B cell (primary cell): ENCODE measurements at regions of chr18 and their contacts with region 1.

Region 1: GRCh38 chr18:59139371-59140298 is at the start of gene SEC11C:
- DNase-seq: peak; percentile 100
- ATAC-seq: peak; percentile 85
- H3K4me3 ChIP-seq: peak within 1 kb of the TSS; percentile 67 to 89 (median 82)
- H3K4me3 Mint-ChIP-seq: peak within 1 kb of the TSS; percentile 99
- H3K27ac ChIP-seq: peak within 1 kb of the TSS; percentile 99 to 100
- H3K27ac Mint-ChIP-seq: peak within 1 kb of the TSS; percentile 100
- H3K4me1 ChIP-seq: peaks cover 24 to 38% of the 10 kb centered on the region in 2 donors
- H3K4me1 Mint-ChIP-seq: peaks cover 42% of the 10 kb centered on the region
- H3K27me3 ChIP-seq: peaks cover 0 to 12% (median 4%) of the 10 kb centered on the region in 4 experiments
- H3K27me3 Mint-ChIP-seq: peaks cover 7% of the 10 kb centered on the region
- CTCF ChIP-seq: no peak
- total RNA-seq, gene SEC11C: 69.8 and 76.8 TPM in 2 replicates

Region 2: GRCh38 chr18:57621246-57621604 is 1518.4 kb before region 1 on chr18:
- CTCF ChIA-PET with region 1: no interaction called
- POLR2A ChIA-PET with region 1: no interaction called
- intact Hi-C with region 1: loop called (anchors 5 kb)
- DNase-seq: no peak
- ATAC-seq: peak; percentile 4
- H3K4me3 ChIP-seq: peak overlapping the region; percentile 85 to 90 (median 89)
- H3K4me3 Mint-ChIP-seq: peak overlapping the region; percentile 93
- H3K27ac ChIP-seq: peak overlapping the region; percentile 86 to 88
- H3K27ac Mint-ChIP-seq: peak overlapping the region; percentile 95
- H3K4me1 ChIP-seq: peaks cover 11 to 24% of the 10 kb centered on the region in 2 donors
- H3K4me1 Mint-ChIP-seq: peaks cover 32% of the 10 kb centered on the region
- H3K27me3 ChIP-seq: no peaks in the 10 kb centered on the region
- H3K27me3 Mint-ChIP-seq: no peaks in the 10 kb centered on the region
- CTCF ChIP-seq: no peak

Region 3: GRCh38 chr18:58661423-58661822 is 478.2 kb before region 1 on chr18:
- CTCF ChIA-PET with region 1: no interaction called
- POLR2A ChIA-PET with region 1: no interaction called
- intact Hi-C with region 1: loop called (anchors 5 kb)
- DNase-seq: no peak
- ATAC-seq: no peak
- H3K4me3 ChIP-seq: peak overlapping the region in 1 of 5 experiments; percentile 43
- H3K4me3 Mint-ChIP-seq: peak overlapping the region; percentile 52
- H3K27ac ChIP-seq: peak overlapping the region in 1 of 2 donors; percentile 85
- H3K27ac Mint-ChIP-seq: peak overlapping the region; percentile 66
- H3K4me1 ChIP-seq: peaks cover 78% of the 10 kb centered on the region in 2 donors
- H3K4me1 Mint-ChIP-seq: peaks cover 82% of the 10 kb centered on the region
- H3K27me3 ChIP-seq: no peaks in the 10 kb centered on the region
- H3K27me3 Mint-ChIP-seq: no peaks in the 10 kb centered on the region
- CTCF ChIP-seq: no peak

Region 4: DNA sequence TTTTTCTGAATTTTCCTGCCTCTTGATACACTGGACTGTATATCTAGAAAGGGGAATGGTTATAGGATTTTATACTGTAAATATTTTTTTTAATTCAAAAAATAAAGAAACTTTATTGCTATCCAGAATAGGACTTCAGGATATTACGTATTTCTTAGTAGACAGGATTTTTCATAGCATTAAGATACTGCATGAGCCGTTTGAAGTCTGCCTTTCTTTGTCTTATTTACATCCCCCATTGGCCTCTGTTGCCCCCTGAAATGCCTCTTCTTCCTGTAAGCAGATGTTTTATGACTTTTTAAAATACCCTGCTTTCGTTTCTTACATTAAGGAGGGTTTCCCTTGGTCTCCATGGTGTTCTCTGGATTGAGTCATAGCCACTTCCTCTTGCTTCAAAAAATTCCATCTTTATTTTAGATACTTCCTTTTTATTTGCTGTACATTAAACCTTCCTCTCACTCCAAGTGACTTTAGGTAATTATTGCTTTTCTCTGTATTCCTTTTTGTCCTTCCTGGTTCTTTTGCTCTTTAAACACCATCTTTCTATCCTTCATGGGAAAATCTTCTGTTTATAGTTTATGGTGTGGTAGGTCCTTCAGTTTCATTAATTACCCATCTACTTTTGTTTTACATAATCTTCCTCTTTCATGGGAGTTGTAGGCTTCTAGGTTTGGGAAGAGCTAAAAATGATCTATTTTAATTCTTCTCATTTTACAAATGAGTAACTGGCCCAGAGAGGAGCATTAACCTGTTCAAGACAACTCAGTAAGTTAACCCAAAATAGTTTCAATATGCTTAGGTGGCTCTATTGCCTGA is 202.4 kb before region 1 on chr18:
- CTCF ChIA-PET with region 1: no interaction called
- POLR2A ChIA-PET with region 1: no interaction called
- intact Hi-C with region 1: no loop called
- DNase-seq: no peak
- ATAC-seq: no peak
- H3K4me3 ChIP-seq: no peak overlapping the region
- H3K4me3 Mint-ChIP-seq: no peak overlapping the region
- H3K27ac ChIP-seq: peak overlapping the region in 1 of 2 donors; percentile 55
- H3K27ac Mint-ChIP-seq: no peak overlapping the region
- H3K4me1 ChIP-seq: peaks cover under 1 to 4% of the 10 kb centered on the region in 2 donors
- H3K4me1 Mint-ChIP-seq: peaks cover 19% of the 10 kb centered on the region
- H3K27me3 ChIP-seq: no peaks in the 10 kb centered on the region
- H3K27me3 Mint-ChIP-seq: no peaks in the 10 kb centered on the region
- CTCF ChIP-seq: no peak

Region 5: DNA sequence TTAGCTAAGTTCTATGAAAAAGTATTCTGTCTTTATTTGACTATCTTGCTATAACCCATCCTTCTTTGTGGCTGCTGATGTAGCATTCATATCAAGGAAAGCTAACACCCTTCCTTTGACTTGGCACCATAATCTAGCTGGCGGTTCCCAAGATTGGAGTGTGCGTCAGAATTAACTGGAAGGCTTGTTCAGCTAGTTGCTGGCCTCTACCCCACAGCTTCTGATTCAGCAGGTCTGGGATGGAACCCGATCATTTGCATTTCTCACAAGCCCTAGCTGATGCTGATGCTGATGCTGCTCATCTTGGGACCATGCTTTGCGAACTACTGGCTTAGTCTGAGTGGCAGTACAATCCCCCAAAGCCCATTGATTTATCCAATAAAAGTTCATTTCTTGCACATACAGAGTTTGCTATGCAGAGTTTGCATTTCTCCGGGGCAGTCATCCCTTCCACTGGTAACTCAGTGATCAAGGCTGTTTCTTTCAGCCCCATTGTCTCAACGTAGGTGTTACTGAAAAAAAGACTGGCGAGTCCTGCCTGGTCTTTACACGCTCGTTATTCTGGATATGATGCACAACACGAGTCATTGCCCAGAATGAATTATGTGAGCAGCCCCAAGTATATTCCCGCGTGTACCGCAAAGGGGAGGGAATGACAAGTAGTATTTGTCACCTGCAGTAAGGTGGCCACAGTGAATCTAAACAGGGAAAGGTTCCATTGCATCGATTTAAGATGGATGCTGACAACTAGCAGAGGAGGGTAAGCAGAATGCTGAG is 178.5 kb before region 1 on chr18:
- CTCF ChIA-PET with region 1: no interaction called
- POLR2A ChIA-PET with region 1: no interaction called
- intact Hi-C with region 1: loop called (anchors 10 kb)
- DNase-seq: no peak
- ATAC-seq: no peak
- H3K4me3 ChIP-seq: no peak overlapping the region
- H3K4me3 Mint-ChIP-seq: peak overlapping the region; percentile 35
- H3K27ac ChIP-seq: peak overlapping the region in 1 of 2 donors; percentile 16
- H3K27ac Mint-ChIP-seq: peak overlapping the region; percentile 77
- H3K4me1 ChIP-seq: peaks cover 32 to 33% of the 10 kb centered on the region in 2 donors
- H3K4me1 Mint-ChIP-seq: peaks cover 50% of the 10 kb centered on the region
- H3K27me3 ChIP-seq: no peaks in the 10 kb centered on the region
- H3K27me3 Mint-ChIP-seq: no peaks in the 10 kb centered on the region
- CTCF ChIP-seq: no peak

Region 6: DNA sequence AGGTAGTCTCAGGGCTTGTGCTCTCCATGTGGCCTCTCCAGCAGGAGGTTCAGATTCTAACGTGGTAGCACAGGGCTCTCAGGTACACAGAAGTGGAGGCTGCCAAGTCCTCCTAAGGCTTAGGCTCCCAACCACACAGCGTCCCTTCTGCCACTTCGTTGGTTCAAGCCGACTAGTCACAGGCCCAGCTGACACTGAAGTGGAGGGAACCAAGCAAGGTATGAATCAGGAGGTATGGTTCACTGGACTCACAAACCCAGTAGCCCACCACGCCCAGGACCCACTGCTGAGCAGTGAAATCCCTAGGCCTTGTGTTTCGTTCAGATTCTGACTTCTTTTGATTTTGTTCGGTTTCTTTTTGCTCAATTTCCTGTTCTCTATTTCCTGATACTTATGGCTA is 46.0 kb before region 1 on chr18:
- CTCF ChIA-PET with region 1: interaction called, 3 read pairs
- POLR2A ChIA-PET with region 1: no interaction called
- intact Hi-C with region 1: loop called (anchors 2 kb)
- DNase-seq: peak; percentile 54
- ATAC-seq: peak; percentile 85
- H3K4me3 ChIP-seq: peak overlapping the region in 1 of 5 experiments; percentile 20
- H3K4me3 Mint-ChIP-seq: peak overlapping the region; percentile 70
- H3K27ac ChIP-seq: peak overlapping the region; percentile 64 to 68
- H3K27ac Mint-ChIP-seq: peak overlapping the region; percentile 88
- H3K4me1 ChIP-seq: peaks cover 25 to 27% of the 10 kb centered on the region in 2 donors
- H3K4me1 Mint-ChIP-seq: peaks cover 29% of the 10 kb centered on the region
- H3K27me3 ChIP-seq: no peaks in the 10 kb centered on the region
- H3K27me3 Mint-ChIP-seq: peaks cover 6% of the 10 kb centered on the region
- CTCF ChIP-seq: no peak

Region 7: GRCh38 chr18:59109375-59109774 is 30.3 kb before region 1 on chr18:
- CTCF ChIA-PET with region 1: no interaction called
- POLR2A ChIA-PET with region 1: no interaction called
- intact Hi-C with region 1: no loop called
- DNase-seq: no peak
- ATAC-seq: no peak
- H3K4me3 ChIP-seq: no peak overlapping the region
- H3K4me3 Mint-ChIP-seq: no peak overlapping the region
- H3K27ac ChIP-seq: no peak overlapping the region
- H3K27ac Mint-ChIP-seq: no peak overlapping the region
- H3K4me1 ChIP-seq: no peaks in the 10 kb centered on the region
- H3K4me1 Mint-ChIP-seq: no peaks in the 10 kb centered on the region
- H3K27me3 ChIP-seq: peaks cover 0 to 39% (median 35%) of the 10 kb centered on the region in 4 experiments
- H3K27me3 Mint-ChIP-seq: peaks cover 72% of the 10 kb centered on the region
- CTCF ChIP-seq: no peak

Region 8: GRCh38 chr18:59502274-59503175 is 362.9 kb after region 1 on chr18:
- CTCF ChIA-PET with region 1: no interaction called
- POLR2A ChIA-PET with region 1: no interaction called
- intact Hi-C with region 1: no loop called
- DNase-seq: no peak
- ATAC-seq: no peak
- H3K4me3 ChIP-seq: no peak overlapping the region
- H3K4me3 Mint-ChIP-seq: no peak overlapping the region
- H3K27ac ChIP-seq: no peak overlapping the region
- H3K27ac Mint-ChIP-seq: no peak overlapping the region
- H3K4me1 ChIP-seq: no peaks in the 10 kb centered on the region
- H3K4me1 Mint-ChIP-seq: no peaks in the 10 kb centered on the region
- H3K27me3 ChIP-seq: peaks cover 0 to 4% (median 0%) of the 10 kb centered on the region in 4 experiments
- H3K27me3 Mint-ChIP-seq: peaks cover 27% of the 10 kb centered on the region
- CTCF ChIP-seq: no peak